Gastrocnemius medialis (tissue), 4 donors: ENCODE measurements at regions of chr6 and their contacts with region 1.

Region 1: GRCh38 chr6:125956506-125957390 is at the start of gene HINT3:
- DNase-seq: peak; percentile 93 to 94
- ATAC-seq: peak; percentile 93 to 98
- H3K4me3 ChIP-seq: peak within 1 kb of the TSS; percentile 62 to 97 (median 82)
- H3K27ac ChIP-seq: peak within 1 kb of the TSS; percentile 83 to 95 (median 92)
- H3K4me1 ChIP-seq: peaks cover 10 to 20% of the 10 kb centered on the region in 2 donors
- H3K27me3 ChIP-seq: no peaks in the 10 kb centered on the region
- CTCF ChIP-seq: peak; percentile 97 to 99 (median 98)
- POLR2A ChIP-seq: peak; percentile 59 to 62
- total RNA-seq, gene HINT3: 54.3 to 81.5 (median 67.5) TPM

Region 2: DNA sequence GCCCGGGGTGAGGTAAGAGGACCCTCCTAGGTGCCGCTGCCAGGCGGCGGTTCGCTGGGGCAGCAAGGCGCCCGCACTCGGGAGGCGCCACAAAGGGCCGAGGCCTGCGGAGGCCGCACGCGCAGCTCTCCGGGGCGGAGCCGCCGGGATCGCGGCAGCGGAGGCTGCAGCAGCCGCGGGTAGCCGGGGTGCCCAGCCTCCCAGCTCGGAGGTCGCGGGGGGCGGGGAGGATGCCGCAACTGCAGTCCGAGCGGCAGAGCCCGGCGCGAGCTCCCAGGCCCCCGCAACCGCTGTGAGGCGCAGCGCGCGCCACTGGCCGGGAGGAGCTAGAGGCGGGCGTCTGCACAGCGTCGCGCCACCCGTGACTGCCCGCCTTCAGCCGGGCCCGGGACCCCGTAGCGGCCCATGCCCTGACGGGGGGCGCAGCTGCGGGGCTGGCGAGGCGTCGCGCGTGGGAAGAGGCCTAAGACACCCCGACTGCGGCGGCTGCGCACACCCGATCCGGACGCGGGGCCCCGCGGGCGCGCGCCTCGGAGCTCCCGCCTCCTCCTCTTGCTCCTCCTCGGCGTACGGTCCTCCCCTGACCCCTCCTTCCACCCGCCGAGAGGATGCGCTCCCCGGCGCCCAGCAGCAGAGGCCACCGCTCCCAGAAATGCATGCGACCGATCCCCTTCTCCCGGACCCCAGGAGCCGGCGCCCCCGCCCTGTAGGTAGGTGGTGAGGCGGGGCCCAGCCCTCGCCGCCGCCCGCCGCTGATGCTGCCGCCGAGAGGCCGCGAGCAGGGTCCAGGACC is 166.2 kb before region 1 on chr6 and contains the start of gene NCOA7:
- in situ Hi-C with region 1: loop called in 2 of 4 experiments (anchors 5 to 10 kb)
- intact Hi-C with region 1: no loop called
- DNase-seq: peak; percentile 67 to 71
- ATAC-seq: peak; percentile 83 to 85
- H3K4me3 ChIP-seq: peak within 1 kb of the TSS; percentile 76 to 97 (median 89)
- H3K27ac ChIP-seq: peak within 1 kb of the TSS; percentile 90 to 98 (median 92)
- H3K4me1 ChIP-seq: peaks cover 19% of the 10 kb centered on the region in 2 donors
- H3K27me3 ChIP-seq: no peaks in the 10 kb centered on the region
- CTCF ChIP-seq: peak in 2 of 5 experiments; percentile 17 to 27
- POLR2A ChIP-seq: peak; percentile 81 to 86
- total RNA-seq, gene NCOA7: 7.0 to 9.5 (median 9.2) TPM

Region 3: GRCh38 chr6:125918681-125919566 is 37.8 kb before region 1 on chr6:
- in situ Hi-C with region 1: no loop called
- intact Hi-C with region 1: loop called (anchors 2 kb)
- DNase-seq: peak in 1 of 2 donors; percentile 43
- ATAC-seq: peak; percentile 96 to 99
- H3K4me3 ChIP-seq: peak overlapping the region; percentile 23 to 56 (median 42)
- H3K27ac ChIP-seq: peak overlapping the region; percentile 70 to 77 (median 74)
- H3K4me1 ChIP-seq: peaks cover 0 to 8% of the 10 kb centered on the region in 2 donors
- H3K27me3 ChIP-seq: no peaks in the 10 kb centered on the region
- CTCF ChIP-seq: no peak
- POLR2A ChIP-seq: peak in 1 of 2 donors; percentile 53

Region 4: DNA sequence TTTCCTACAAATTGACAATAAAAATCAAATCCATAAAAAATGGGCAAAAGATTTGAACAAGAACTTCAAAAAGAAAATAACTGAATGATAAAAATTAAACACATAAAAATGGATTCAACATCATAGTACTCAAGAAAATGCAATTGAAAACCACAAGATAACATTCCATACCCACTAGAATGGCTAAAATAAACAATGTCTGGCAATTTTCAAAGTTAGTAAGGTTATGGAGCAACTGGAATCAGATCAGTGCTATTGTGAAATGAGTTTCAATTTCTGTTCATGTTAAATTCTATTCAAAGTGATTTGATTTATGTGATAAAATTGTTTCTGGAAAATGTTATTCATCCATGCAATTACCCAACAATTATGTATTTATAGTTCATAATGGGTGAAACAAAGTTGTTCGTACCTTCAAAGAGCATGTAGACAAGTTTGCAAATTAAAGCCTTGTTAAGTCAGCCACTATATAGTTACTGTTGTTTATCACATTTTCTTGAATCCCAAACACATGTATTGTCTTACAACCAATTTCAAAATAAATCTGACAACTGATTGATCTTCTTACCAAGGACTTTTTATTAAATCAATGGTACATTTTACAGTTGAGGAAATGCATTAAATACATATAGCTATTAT is 231.6 kb after region 1 on chr6:
- in situ Hi-C with region 1: no loop called
- intact Hi-C with region 1: no loop called
- DNase-seq: no peak
- ATAC-seq: no peak
- H3K4me3 ChIP-seq: no peak overlapping the region
- H3K27ac ChIP-seq: no peak overlapping the region
- H3K4me1 ChIP-seq: no peaks in the 10 kb centered on the region
- H3K27me3 ChIP-seq: no peaks in the 10 kb centered on the region
- CTCF ChIP-seq: no peak
- POLR2A ChIP-seq: no peak